ENCODE measurements at regions of chr5 and their contacts with region 1.

Region 1: GRCh38 chr5:35656721-35657120 is 39.1 kb downstream of the SPEF2 start:
- DNase-seq: no peak
- H3K4me3 Mint-ChIP-seq: no peak overlapping the region
- H3K27ac Mint-ChIP-seq: no peak overlapping the region
- H3K4me1 Mint-ChIP-seq: peaks cover 8% of the 10 kb centered on the region
- H3K27me3 Mint-ChIP-seq: no peaks in the 10 kb centered on the region

Region 2: DNA sequence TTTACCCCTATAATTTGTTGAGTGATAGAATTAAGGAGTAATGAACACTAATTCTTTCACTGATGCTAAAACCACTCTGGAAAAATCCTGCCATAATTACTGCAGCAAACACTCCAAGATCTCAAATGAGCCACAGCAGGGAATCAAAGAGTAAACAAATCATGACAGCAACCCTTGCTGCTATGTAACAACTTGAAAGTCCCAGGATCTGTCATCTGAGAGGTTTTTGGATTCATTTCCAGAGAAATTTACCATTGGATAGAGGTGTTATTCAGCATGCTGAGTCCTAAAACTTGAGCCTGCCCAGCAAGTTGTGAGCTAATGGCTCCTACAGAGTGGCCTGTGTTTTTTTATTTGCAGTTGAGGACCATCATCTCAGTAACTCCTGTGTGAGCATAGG is 485.6 kb before region 1 on chr5:
- CTCF ChIA-PET with region 1: no interaction called
- DNase-seq: no peak
- H3K4me3 Mint-ChIP-seq: no peak overlapping the region
- H3K27ac Mint-ChIP-seq: no peak overlapping the region
- H3K4me1 Mint-ChIP-seq: no peaks in the 10 kb centered on the region
- H3K27me3 Mint-ChIP-seq: peaks cover 5% of the 10 kb centered on the region

Region 3: DNA sequence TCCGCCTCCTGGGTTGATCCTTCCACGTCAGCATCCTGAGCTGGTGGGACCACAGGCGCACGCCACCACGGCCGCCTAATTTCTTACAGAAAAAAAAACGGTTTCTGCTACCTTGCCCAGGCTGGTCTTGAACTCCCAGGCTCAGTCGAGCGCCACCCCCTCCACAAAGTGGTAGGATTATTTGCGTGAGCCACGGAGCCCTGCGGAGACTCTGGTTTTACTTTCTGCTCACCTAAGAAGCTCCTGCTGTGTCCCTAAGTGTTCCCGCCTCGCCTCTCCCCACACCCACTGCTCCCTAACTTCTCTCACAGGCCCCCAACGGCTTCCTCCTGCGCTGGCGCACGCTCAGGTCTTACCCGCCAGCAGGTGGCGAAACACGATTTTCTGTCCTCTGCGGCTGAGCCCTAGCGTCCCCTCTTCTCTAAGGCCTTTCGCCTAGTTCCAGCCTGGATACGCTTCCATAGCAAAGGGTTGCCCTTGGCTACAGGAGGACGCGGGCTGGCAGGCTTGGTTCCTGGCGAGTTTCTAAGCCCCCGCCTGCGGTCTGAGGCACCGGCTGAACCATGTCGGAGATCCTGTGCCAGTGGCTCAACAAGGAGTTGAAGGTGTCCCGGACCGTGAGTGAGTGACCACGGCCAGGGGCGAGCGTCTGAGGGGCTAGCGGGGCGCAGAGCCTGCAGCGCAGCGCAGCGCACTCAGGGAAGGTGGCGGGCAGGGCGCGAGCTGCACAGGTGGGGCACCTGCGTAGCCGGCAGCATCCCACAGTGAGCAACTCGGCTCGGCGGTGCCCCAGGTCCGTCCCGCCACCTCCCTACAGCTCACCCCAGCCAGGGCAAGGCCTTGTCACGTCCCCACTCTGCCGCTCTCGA is 39.1 kb before region 1 on chr5 and contains the start of gene SPEF2:
- CTCF ChIA-PET with region 1: interaction called, 10 read pairs
- DNase-seq: peak; percentile 84
- H3K4me3 Mint-ChIP-seq: peak within 1 kb of the TSS; percentile 92
- H3K27ac Mint-ChIP-seq: peak within 1 kb of the TSS; percentile 90
- H3K4me1 Mint-ChIP-seq: peaks cover 27% of the 10 kb centered on the region
- H3K27me3 Mint-ChIP-seq: peaks cover 7% of the 10 kb centered on the region

Measured in activated naive CD4-positive, alpha-beta T cell treated with anti-CD3 and anti-CD28 coated beads, Interleukin-2, amount 10 ng/mL, durations not matched to agents 7 days and 5 days (primary cell).